GM18951 (cell line): ENCODE measurements at regions of chr14 and their contacts with region 1.

Region 1: GRCh38 chr14:91177073-91178034 is 63.5 kb downstream of the DGLUCY start:
- POLR2A ChIP-seq: no peak

Region 2: GRCh38 chr14:90797482-90797881 is 379.9 kb before region 1 on chr14:
- in situ Hi-C with region 1: no loop called
- POLR2A ChIP-seq: no peak

Region 3: DNA sequence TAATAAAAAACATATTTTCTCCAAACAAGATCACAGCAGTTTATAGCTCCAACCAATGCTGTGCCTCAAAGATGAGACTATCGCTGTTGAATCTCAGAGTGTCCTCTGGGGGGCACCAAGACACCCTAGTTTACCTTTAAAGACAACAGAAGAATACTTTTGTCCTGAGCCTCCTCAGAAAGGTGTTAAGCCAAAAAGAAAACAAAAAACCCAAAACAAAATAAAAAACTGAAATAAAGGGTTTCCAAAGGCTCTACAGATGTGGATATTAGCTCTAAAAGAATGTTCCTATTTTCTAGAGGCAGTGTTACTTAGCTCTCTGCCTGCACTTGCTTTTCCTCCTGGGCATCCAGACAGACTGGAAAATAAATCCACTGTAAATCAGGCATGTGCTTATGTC is 274.3 kb before region 1 on chr14:
- in situ Hi-C with region 1: loop called (anchors 5 kb)
- POLR2A ChIP-seq: no peak

Region 4: DNA sequence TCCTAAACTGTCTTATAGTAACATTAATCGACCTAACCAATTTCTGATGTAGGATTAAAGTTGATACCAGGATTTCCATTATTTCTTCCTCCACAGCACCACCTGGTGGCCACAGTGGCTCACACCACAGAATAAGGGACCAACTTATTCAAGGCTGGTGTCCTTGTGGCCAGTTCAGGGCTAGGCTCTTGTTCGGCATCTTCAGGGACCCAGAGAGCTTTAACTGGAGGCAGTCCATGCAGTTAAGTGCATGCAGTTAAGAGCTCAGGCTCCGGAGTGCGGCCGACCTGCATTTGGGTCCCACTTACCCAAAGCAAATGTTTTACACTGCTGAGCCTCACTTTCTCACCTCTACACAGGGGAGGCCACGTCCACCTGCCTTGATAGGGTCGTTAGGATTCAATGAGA is 109.2 kb after region 1 on chr14:
- in situ Hi-C with region 1: loop called (anchors 5 kb)
- POLR2A ChIP-seq: no peak

Region 5: GRCh38 chr14:91420686-91421085 is 243.3 kb after region 1 on chr14:
- in situ Hi-C with region 1: loop called (anchors 10 kb)
- POLR2A ChIP-seq: no peak